Psoas muscle (tissue), 8 donors: ENCODE measurements at regions of chr1 and their contacts with region 1.

Region 1: DNA sequence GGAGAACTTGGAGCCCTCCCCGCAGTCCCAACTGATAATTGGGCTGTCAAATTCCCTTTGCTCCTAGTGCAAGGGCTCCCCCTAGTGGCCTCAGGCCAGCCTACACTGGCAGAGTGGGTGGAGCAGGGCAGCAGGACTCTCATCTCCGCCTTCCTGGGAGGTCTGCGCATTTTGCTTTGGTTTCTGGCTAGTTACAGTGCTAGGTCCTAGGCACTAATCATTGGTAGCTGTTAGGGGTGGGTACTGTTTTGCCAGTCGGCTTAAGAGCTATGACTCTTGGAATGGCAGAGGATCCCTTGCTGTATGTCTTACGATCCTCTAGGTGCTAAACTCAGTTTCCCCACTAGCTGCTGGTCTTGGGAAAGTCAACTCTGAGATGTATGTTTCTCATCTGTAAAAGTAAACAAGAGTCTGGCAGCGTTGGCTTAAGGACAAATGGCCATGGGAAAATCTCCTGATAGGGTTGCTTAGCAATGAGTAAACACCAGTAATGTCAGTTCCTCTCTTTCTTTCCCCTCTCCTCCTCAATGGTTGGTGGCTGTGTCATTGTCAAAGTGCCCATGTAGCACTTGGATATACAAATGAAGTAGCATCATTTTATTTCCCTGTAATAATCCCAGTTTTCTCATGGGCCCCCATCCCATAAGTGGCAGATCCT is 2.1 kb upstream of the FYB2 start:
- DNase-seq: peak; percentile 79 to 90
- ATAC-seq: peak; percentile 76 to 88 (median 81)
- H3K4me3 ChIP-seq: no peak overlapping the region
- H3K27ac ChIP-seq: no peak overlapping the region
- H3K4me1 ChIP-seq: peaks cover 28% of the 10 kb centered on the region
- H3K27me3 ChIP-seq: peaks cover 0 to 6% (median 0%) of the 10 kb centered on the region in 3 donors
- CTCF ChIP-seq: peak; percentile 95

Region 2: GRCh38 chr1:56189946-56190792 is 631.1 kb before region 1 on chr1:
- intact Hi-C with region 1: loop called in 1 of 2 experiments (anchors 10 kb)
- DNase-seq: no peak
- ATAC-seq: peak; percentile 46 to 76 (median 65)
- H3K4me3 ChIP-seq: peak overlapping the region; percentile 4
- H3K27ac ChIP-seq: peak overlapping the region; percentile 15
- H3K4me1 ChIP-seq: peaks cover 9% of the 10 kb centered on the region
- H3K27me3 ChIP-seq: no peaks in the 10 kb centered on the region
- CTCF ChIP-seq: peak; percentile 46

Region 3: DNA sequence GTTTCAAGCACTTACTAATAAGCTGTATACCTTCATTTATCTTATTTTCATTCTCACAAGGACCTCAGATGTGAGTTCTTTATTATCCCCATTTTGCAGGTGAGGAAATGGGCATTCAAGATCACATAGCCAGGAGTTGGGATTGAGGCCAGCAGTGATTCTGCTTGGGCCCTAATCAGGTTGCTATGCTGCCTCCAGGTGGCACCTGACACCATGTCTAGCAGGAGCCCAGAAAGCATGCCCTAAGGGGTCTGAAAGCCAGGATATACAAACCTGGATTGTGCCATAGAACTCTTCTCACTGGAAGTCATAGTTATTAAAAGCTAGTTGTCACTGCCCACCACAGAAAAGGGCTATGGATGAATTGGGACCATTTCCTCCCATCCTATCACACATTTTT is 63.1 kb before region 1 on chr1:
- intact Hi-C with region 1: loop called (anchors 1 to 5 kb)
- DNase-seq: peak; percentile 18 to 59
- ATAC-seq: peak; percentile 59 to 93 (median 80)
- H3K4me3 ChIP-seq: no peak overlapping the region
- H3K27ac ChIP-seq: no peak overlapping the region
- H3K4me1 ChIP-seq: no peaks in the 10 kb centered on the region
- H3K27me3 ChIP-seq: no peaks in the 10 kb centered on the region
- CTCF ChIP-seq: peak; percentile 52

Region 4: DNA sequence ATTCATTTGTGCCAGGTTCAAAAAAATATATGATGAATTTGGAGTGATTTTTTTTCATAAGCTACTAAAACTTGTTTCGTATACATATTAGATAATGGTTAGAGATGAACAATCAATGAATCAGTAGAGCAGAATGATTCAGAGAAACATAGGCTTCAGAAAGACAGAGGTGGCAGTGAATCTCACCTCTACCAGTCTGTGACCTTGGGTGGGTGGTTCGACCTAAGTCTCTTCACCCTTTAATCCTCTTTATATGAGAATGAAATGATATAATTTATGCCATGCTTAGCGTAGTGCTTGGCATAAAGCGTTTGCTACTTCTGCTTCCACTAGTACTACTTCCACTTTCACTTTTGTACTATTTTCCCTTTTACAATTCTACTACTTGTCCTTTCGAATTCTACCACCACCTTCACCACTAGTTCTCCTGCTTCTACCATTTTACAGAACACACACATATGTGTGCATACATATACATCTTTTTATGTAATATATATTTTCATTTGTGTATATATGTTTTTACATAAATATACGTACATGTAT is 47.1 kb before region 1 on chr1:
- intact Hi-C with region 1: no loop called
- DNase-seq: no peak
- ATAC-seq: no peak
- H3K4me3 ChIP-seq: no peak overlapping the region
- H3K27ac ChIP-seq: no peak overlapping the region
- H3K4me1 ChIP-seq: no peaks in the 10 kb centered on the region
- H3K27me3 ChIP-seq: no peaks in the 10 kb centered on the region
- CTCF ChIP-seq: no peak

Region 5: GRCh38 chr1:56866656-56867055 is 45.4 kb after region 1 on chr1:
- intact Hi-C with region 1: no loop called
- DNase-seq: no peak
- ATAC-seq: no peak
- H3K4me3 ChIP-seq: no peak overlapping the region
- H3K27ac ChIP-seq: no peak overlapping the region
- H3K4me1 ChIP-seq: no peaks in the 10 kb centered on the region
- H3K27me3 ChIP-seq: peaks cover 0 to 4% (median 0%) of the 10 kb centered on the region in 3 donors
- CTCF ChIP-seq: no peak